ENCODE measurements at regions of chr1 and their contacts with region 1.

Region 1: GRCh38 chr1:188888387-188888786 is 1589.3 kb downstream of the BRINP3 start:
- DNase-seq: peak; percentile 52
- ATAC-seq: peak; percentile 24; the same call in 1 of the 2 replicates
- H3K4me3 ChIP-seq: no peak overlapping the region
- H3K27ac ChIP-seq: peak overlapping the region; percentile 91
- H3K4me1 ChIP-seq: peaks cover 5% of the 10 kb centered on the region
- H3K27me3 ChIP-seq: no peaks in the 10 kb centered on the region
- CTCF ChIP-seq: no peak

Region 2: DNA sequence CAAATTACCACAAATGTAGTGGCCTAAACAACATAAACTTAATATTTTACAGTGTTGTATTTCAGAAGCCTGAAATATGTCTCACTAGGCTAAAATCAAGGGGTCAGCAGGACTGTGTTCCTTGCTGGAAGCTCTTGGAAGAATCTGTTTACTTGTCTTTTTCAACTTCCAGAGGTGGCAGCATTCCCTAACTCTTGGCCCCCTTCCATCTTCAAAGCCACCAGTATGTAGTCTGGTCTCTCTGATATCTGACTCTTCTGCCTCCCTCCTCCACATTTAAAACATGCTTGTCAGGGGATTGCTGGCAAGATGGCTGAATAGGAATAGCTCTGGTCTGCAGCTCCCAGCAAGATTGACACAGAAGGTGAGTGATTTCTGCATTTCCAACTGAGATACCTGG is 1492.2 kb before region 1 on chr1:
- CTCF ChIA-PET with region 1: no interaction called
- POLR2A ChIA-PET with region 1: interaction called, 12 read pairs
- intact Hi-C with region 1: no loop called
- DNase-seq: no peak
- ATAC-seq: no peak
- H3K4me3 ChIP-seq: no peak overlapping the region
- H3K27ac ChIP-seq: no peak overlapping the region
- H3K4me1 ChIP-seq: no peaks in the 10 kb centered on the region
- H3K27me3 ChIP-seq: no peaks in the 10 kb centered on the region
- CTCF ChIP-seq: no peak

Region 3: DNA sequence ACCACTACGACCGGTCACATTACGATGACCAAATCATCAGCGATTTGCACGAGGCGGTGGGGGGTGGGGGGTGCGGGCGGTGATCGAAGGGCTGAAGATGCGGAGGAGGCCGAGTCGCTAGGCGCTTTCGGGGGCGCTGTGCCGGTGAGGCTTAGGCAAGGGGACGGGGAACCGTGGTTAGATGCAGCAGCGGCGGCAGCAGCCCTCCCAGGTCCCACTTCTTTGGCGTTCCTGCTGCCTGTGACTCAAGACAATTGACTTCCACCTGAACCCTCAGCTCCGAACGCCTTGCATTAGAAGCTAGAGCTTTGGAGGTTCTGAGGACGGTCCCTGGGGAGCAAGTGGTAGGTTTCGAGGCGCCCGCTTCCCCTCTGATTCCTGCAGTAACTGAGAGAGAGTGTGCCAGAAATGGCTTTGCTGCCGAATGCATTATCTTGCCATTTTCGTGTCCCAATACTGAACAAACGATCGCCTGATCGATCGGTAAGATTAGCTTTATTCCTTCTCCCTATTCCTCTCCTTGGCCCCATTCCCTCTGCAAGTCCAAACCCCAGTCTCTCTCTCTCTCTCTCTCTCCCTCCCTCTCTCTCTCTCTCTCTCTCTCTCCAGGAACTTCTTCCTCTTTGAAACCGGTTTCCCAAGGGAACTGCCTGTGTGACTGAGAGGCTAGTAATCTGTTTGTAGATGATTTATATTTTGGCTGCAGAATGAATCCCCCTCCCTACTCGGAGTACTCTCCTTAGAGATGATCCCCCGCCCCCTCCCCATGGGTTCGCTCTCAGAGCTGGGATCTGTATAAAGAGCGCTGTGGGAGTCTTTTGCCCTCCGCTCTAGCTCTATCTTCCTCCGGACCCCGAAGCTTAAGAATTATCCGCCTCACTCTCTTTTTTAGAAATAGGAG is 1590.0 kb after region 1 on chr1:
- CTCF ChIA-PET with region 1: no interaction called
- POLR2A ChIA-PET with region 1: interaction called, 43 read pairs
- intact Hi-C with region 1: no loop called
- DNase-seq: peak; percentile 72
- ATAC-seq: peak; percentile 62
- H3K4me3 ChIP-seq: peak overlapping the region; percentile 60
- H3K27ac ChIP-seq: no peak overlapping the region
- H3K4me1 ChIP-seq: 0 out of 2 replicates have a peak, but pooled peaks cover 6% of the 10 kb centered on the region
- H3K27me3 ChIP-seq: peaks cover 58% of the 10 kb centered on the region
- CTCF ChIP-seq: no peak